Activated B cell treated with CpG ODN at 0.5 μM for 24 hours (primary cell): ENCODE measurements at regions of chr13 and their contacts with region 1.

Region 1: GRCh38 chr13:79541426-79542049 is 60.6 kb downstream of the NDFIP2 start:
- DNase-seq: no peak
- ATAC-seq: peak; percentile 62
- H3K4me3 Mint-ChIP-seq: no peak overlapping the region
- H3K27ac Mint-ChIP-seq: no peak overlapping the region
- H3K4me1 Mint-ChIP-seq: no peaks in the 10 kb centered on the region
- H3K27me3 Mint-ChIP-seq: no peaks in the 10 kb centered on the region
- CTCF ChIP-seq: peak; percentile 32

Region 2: GRCh38 chr13:78137404-78138142 is 1404.0 kb before region 1 on chr13:
- CTCF ChIA-PET with region 1: interaction called, 20 read pairs
- POLR2A ChIA-PET with region 1: no interaction called
- intact Hi-C with region 1: loop called (anchors 1 kb)
- DNase-seq: peak; percentile 18
- ATAC-seq: peak; percentile 71
- H3K4me3 Mint-ChIP-seq: peak overlapping the region; percentile 79
- H3K27ac Mint-ChIP-seq: no peak overlapping the region
- H3K4me1 Mint-ChIP-seq: peaks cover 5% of the 10 kb centered on the region
- H3K27me3 Mint-ChIP-seq: peaks cover 5% of the 10 kb centered on the region
- CTCF ChIP-seq: no peak

Region 3: GRCh38 chr13:79320433-79320832 is 221.1 kb before region 1 on chr13:
- CTCF ChIA-PET with region 1: no interaction called
- POLR2A ChIA-PET with region 1: no interaction called
- intact Hi-C with region 1: loop called (anchors 10 kb)
- DNase-seq: no peak
- ATAC-seq: no peak
- H3K4me3 Mint-ChIP-seq: no peak overlapping the region
- H3K27ac Mint-ChIP-seq: no peak overlapping the region
- H3K4me1 Mint-ChIP-seq: no peaks in the 10 kb centered on the region
- H3K27me3 Mint-ChIP-seq: no peaks in the 10 kb centered on the region
- CTCF ChIP-seq: no peak

Region 4: DNA sequence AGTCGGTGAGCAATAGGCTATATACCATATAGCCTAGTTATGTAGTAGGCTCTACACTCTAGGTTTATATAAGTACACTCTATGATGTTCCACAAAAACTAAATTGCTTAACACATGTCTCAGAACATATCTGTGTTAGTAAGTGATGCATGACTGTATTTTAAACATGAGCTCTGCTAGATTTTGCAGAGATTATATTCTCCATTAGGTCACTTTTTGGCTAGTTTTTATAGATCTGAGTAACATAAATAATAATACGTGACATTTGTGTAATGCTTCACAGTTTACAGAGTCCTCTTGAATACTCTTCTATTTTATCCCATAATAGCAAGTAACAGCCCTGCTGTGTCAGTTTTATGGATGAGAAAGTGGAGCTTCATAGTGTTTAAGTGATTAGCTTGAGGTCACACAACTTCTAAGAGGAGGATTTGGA is 12.8 kb before region 1 on chr13:
- CTCF ChIA-PET with region 1: interaction called, 12 read pairs
- POLR2A ChIA-PET with region 1: no interaction called
- intact Hi-C with region 1: no loop called
- DNase-seq: no peak
- ATAC-seq: no peak
- H3K4me3 Mint-ChIP-seq: no peak overlapping the region
- H3K27ac Mint-ChIP-seq: no peak overlapping the region
- H3K4me1 Mint-ChIP-seq: no peaks in the 10 kb centered on the region
- H3K27me3 Mint-ChIP-seq: no peaks in the 10 kb centered on the region
- CTCF ChIP-seq: no peak

Region 5: GRCh38 chr13:79560953-79561352 is 19.4 kb after region 1 on chr13:
- CTCF ChIA-PET with region 1: no interaction called
- POLR2A ChIA-PET with region 1: no interaction called
- intact Hi-C with region 1: no loop called
- DNase-seq: no peak
- ATAC-seq: no peak
- H3K4me3 Mint-ChIP-seq: no peak overlapping the region
- H3K27ac Mint-ChIP-seq: no peak overlapping the region
- H3K4me1 Mint-ChIP-seq: no peaks in the 10 kb centered on the region
- H3K27me3 Mint-ChIP-seq: peaks cover 8% of the 10 kb centered on the region
- CTCF ChIP-seq: no peak